Activated CD8-positive, alpha-beta T cell treated with anti-CD3 and anti-CD28 coated beads for 36 hours (primary cell): ENCODE measurements at regions of chr2 and their contacts with region 1.

Region 1: GRCh38 chr2:101205521-101205998 is 47.1 kb upstream of the CNOT11 start:
- DNase-seq: peak; percentile 74
- ATAC-seq: peak; percentile 98
- H3K4me3 Mint-ChIP-seq: peak overlapping the region; percentile 51
- H3K27ac Mint-ChIP-seq: peak overlapping the region; percentile 55
- H3K4me1 Mint-ChIP-seq: no peaks in the 10 kb centered on the region
- H3K27me3 Mint-ChIP-seq: no peaks in the 10 kb centered on the region
- CTCF ChIP-seq: peak; percentile 45

Region 2: GRCh38 chr2:100941646-100942240 is 263.8 kb before region 1 on chr2:
- CTCF ChIA-PET with region 1: no interaction called
- POLR2A ChIA-PET with region 1: no interaction called
- intact Hi-C with region 1: no loop called
- DNase-seq: no peak
- ATAC-seq: no peak
- H3K4me3 Mint-ChIP-seq: no peak overlapping the region
- H3K27ac Mint-ChIP-seq: peak overlapping the region; percentile 62
- H3K4me1 Mint-ChIP-seq: peaks cover 22% of the 10 kb centered on the region
- H3K27me3 Mint-ChIP-seq: no peaks in the 10 kb centered on the region
- CTCF ChIP-seq: no peak

Region 3: GRCh38 chr2:101007415-101008345 is 197.9 kb before region 1 on chr2:
- CTCF ChIA-PET with region 1: interaction called, 27 read pairs
- POLR2A ChIA-PET with region 1: interaction called, 3 read pairs
- intact Hi-C with region 1: loop called (anchors 5 kb)
- DNase-seq: no peak
- ATAC-seq: peak; percentile 18
- H3K4me3 Mint-ChIP-seq: no peak overlapping the region
- H3K27ac Mint-ChIP-seq: peak overlapping the region; percentile 75
- H3K4me1 Mint-ChIP-seq: peaks cover 62% of the 10 kb centered on the region
- H3K27me3 Mint-ChIP-seq: no peaks in the 10 kb centered on the region
- CTCF ChIP-seq: no peak

Region 4: DNA sequence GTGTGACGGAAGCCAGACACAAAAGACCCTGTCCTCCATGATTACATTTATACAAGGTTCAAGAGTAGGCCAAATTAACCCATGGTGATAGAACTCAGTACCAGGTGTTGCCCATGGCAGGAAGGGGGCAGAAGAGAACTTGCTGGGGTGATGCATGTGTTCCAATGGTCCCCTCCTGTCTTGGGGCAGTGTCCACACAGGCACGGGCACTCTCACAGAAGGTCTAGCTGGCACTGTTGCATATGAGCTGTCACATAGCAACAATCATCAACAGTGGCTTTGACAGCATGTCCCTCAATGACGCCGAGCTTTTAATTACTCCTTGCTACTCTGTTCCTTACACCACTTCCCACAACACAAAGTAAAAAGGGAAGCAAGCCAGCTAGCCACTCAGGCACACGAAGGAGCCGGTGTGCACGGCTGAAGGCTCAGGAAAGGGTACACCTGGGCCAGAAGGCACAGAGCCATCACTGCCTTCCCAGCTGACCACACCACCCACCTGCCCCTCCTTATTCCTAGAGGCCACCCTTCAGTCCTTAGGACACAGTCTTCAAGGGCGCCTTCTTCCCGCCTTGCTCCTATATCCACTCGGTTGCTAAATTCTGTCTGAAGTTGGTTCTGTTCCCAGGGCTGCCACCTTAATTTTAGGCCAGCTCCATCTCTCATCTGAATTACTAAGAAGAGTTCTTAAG is 174.6 kb before region 1 on chr2:
- CTCF ChIA-PET with region 1: interaction called, 80 read pairs
- POLR2A ChIA-PET with region 1: no interaction called
- intact Hi-C with region 1: loop called (anchors 10 kb)
- DNase-seq: no peak
- ATAC-seq: no peak
- H3K4me3 Mint-ChIP-seq: no peak overlapping the region
- H3K27ac Mint-ChIP-seq: no peak overlapping the region
- H3K4me1 Mint-ChIP-seq: no peaks in the 10 kb centered on the region
- H3K27me3 Mint-ChIP-seq: no peaks in the 10 kb centered on the region
- CTCF ChIP-seq: no peak

Region 5: GRCh38 chr2:101047075-101047766 is 158.3 kb before region 1 on chr2:
- CTCF ChIA-PET with region 1: interaction called, 10 read pairs
- POLR2A ChIA-PET with region 1: no interaction called
- intact Hi-C with region 1: no loop called
- DNase-seq: no peak
- ATAC-seq: no peak
- H3K4me3 Mint-ChIP-seq: no peak overlapping the region
- H3K27ac Mint-ChIP-seq: no peak overlapping the region
- H3K4me1 Mint-ChIP-seq: no peaks in the 10 kb centered on the region
- H3K27me3 Mint-ChIP-seq: no peaks in the 10 kb centered on the region
- CTCF ChIP-seq: no peak

Region 6: DNA sequence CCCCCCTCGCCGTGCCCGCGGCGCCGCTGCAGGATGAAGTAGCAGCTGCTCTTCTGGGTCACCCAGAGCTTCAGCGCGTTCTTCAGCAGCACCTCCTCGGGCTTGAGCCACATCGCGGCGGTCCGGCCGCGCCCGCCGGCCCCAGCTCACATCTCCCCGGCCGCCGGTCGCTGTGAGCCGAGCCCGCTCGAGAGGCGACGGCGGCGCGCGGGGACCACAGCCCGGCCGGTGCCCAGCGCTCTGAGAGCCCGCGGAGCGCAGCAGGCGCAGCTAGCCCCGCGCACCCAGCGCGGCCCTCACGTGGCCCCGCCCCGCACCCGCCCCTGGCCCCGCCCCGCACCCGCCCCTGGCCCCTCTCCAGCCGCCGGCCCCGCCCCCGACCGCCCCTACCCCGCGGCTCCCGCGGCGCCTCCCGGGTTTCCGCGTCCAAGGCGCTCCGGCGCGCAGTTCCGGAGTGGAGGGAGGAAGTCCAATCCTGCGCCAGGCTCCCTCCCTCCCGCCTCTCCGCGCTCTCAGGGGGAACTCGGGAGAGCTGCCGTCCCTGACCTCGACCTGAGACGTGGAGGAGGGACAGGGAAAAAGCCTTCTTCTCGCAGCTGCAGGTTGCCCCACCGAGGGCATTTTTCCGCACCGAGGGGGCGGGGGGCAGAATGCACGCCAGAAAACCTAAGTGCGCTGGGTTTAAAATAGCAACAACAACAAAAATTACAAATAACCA is 54.3 kb before region 1 on chr2 and contains the start of gene TBC1D8:
- CTCF ChIA-PET with region 1: interaction called, 18 read pairs
- POLR2A ChIA-PET with region 1: no interaction called
- intact Hi-C with region 1: no loop called
- DNase-seq: peak; percentile 56
- ATAC-seq: peak; percentile 92
- H3K4me3 Mint-ChIP-seq: peak within 1 kb of the TSS; percentile 72
- H3K27ac Mint-ChIP-seq: no peak within 1 kb of the TSS
- H3K4me1 Mint-ChIP-seq: peaks cover 14% of the 10 kb centered on the region
- H3K27me3 Mint-ChIP-seq: peaks cover 27% of the 10 kb centered on the region
- CTCF ChIP-seq: no peak
- total RNA-seq, gene TBC1D8: 3.2 to 3.3 TPM

Region 7: GRCh38 chr2:101219246-101219645 is 13.7 kb after region 1 on chr2:
- CTCF ChIA-PET with region 1: interaction called, 14 read pairs
- POLR2A ChIA-PET with region 1: no interaction called
- intact Hi-C with region 1: no loop called
- DNase-seq: peak; percentile 13
- ATAC-seq: no peak
- H3K4me3 Mint-ChIP-seq: no peak overlapping the region
- H3K27ac Mint-ChIP-seq: no peak overlapping the region
- H3K4me1 Mint-ChIP-seq: peaks cover 9% of the 10 kb centered on the region
- H3K27me3 Mint-ChIP-seq: no peaks in the 10 kb centered on the region
- CTCF ChIP-seq: no peak